ENCODE measurements at regions of chr3 and their contacts with region 1.

Region 1: DNA sequence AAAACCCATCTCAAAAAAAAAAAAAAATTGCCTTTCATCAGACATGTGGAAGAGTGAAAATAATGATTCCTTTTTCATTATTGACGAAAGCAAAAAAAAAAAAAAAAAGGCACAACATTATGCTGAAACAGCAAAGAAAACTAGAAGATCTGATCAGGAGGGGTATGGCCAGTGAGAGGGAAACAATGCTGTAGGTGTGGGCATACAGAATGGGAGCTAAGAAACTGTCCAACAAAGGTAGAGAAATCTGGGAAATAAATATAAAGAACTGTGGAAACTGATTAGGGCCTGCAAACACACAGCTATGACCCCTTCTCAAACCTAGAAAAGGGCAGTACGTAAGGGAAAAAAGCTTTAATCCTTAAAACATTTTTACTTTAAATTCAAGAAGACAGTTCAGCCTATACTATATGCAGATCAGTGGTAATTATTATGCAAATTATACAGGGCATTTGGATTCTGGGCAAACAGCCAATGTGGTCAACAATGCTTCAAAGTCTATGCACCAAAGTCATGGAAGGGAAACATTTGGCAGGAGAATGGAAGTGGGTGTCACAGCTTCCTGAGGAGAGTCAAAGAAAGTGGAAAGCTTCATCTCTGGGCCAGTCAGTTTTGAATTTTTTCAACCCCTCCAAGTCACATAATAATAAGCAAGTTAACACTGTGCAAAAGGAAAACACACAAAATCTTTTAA is 68.3 kb upstream of the SLC12A8 start:
- DNase-seq: no peak
- ATAC-seq: no peak
- H3K4me3 ChIP-seq: no peak overlapping the region
- H3K27ac ChIP-seq: no peak overlapping the region
- H3K4me1 ChIP-seq: no peaks in the 10 kb centered on the region
- H3K27me3 ChIP-seq: no peaks in the 10 kb centered on the region
- CTCF ChIP-seq: no peak
- EP300 ChIP-seq: no peak
- POLR2A ChIP-seq: no peak
- RAD21 ChIP-seq: no peak

Region 2: DNA sequence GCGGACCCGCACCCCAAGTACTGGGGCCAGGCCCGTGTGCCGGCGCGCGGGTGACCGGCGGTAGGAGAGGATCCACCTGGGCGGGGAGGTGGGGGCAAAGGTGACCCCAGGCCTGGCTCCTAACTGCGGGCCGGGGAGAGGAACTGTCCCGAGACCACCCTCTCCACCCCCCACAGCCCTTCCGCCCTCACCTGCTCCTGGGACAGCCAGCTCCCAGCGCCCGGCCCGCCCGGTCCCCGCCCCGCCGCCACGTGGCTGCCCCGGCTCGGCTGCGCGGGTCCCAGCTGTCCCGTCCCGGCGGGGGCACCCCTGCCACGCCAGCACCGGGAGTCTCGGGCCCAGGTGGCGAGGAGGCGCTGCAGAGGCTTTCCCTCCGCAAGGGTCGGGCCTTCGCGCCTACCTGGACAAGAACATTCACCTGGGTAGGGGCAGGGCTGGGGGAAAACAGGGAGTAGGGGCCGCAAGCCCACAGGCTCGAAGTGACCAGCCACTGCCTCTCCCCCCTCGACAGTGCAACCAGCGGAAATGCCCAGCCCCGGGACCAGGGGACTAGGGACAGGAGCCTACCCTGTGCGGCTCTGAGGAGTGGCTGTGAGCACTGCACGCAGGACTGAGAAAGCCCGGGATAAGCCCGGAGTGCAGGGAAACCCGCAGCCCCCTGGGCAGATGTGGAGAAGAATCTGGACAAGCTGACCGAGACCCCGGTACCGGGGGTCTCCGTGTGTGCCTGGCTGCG is 68.1 kb before region 1 on chr3 and contains the start of gene SLC12A8:
- CTCF ChIA-PET with region 1: no interaction called
- POLR2A ChIA-PET with region 1: no interaction called
- RAD21 ChIA-PET with region 1: no interaction called
- SMC1A ChIA-PET with region 1: no interaction called
- in situ Hi-C with region 1: no loop called
- intact Hi-C with region 1: no loop called
- DNase-seq: no peak
- ATAC-seq: peak; percentile 53
- H3K4me3 ChIP-seq: peak within 1 kb of the TSS; percentile 59; the same call in 1 of the 2 replicates
- H3K27ac ChIP-seq: no peak within 1 kb of the TSS; the same call in 1 of the 2 replicates
- H3K4me1 ChIP-seq: peaks cover 6% of the 10 kb centered on the region
- H3K27me3 ChIP-seq: peaks cover 0 to 7% of the 10 kb centered on the region in 2 experiments; a peak in 2 of 4 replicates
- CTCF ChIP-seq: no peak
- EP300 ChIP-seq: no peak
- POLR2A ChIP-seq: no peak
- RAD21 ChIP-seq: no peak
- polyA plus RNA-seq, gene SLC12A8: 39.8 to 46.1 TPM

Region 3: DNA sequence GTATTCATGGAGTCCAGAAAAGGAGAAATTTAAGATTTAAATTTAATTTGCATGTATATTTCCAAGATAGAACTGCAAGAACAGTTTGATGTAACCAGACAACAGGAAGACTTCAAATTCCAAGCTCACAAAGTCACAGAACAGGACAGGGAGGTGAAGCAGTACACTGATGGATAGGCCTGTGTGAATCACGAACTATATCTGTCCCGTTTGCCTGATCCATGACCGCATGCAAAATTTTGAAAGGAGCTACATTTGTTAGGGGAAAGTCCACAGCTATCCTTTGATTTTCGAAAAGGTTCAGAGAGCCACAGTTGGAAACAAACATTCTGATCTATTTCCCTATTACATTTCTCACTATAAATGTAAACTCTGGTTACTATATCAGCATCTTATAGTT is 11.2 kb after region 1 on chr3:
- CTCF ChIA-PET with region 1: interaction called, 5 read pairs
- POLR2A ChIA-PET with region 1: interaction called, 4 read pairs
- RAD21 ChIA-PET with region 1: no interaction called
- SMC1A ChIA-PET with region 1: interaction called, 12 read pairs
- in situ Hi-C with region 1: no loop called
- intact Hi-C with region 1: no loop called
- DNase-seq: no peak
- ATAC-seq: no peak
- H3K4me3 ChIP-seq: no peak overlapping the region
- H3K27ac ChIP-seq: no peak overlapping the region
- H3K4me1 ChIP-seq: no peaks in the 10 kb centered on the region
- H3K27me3 ChIP-seq: no peaks in the 10 kb centered on the region
- CTCF ChIP-seq: no peak
- EP300 ChIP-seq: no peak
- POLR2A ChIP-seq: no peak
- RAD21 ChIP-seq: no peak

Region 4: GRCh38 chr3:125437631-125438435 is 157.0 kb after region 1 on chr3:
- CTCF ChIA-PET with region 1: interaction called, 3 read pairs
- POLR2A ChIA-PET with region 1: no interaction called
- RAD21 ChIA-PET with region 1: interaction called, 3 read pairs
- SMC1A ChIA-PET with region 1: no interaction called
- in situ Hi-C with region 1: no loop called
- intact Hi-C with region 1: loop called (anchors 10 kb)
- DNase-seq: no peak
- ATAC-seq: peak; percentile 45
- H3K4me3 ChIP-seq: no peak overlapping the region
- H3K27ac ChIP-seq: no peak overlapping the region
- H3K4me1 ChIP-seq: peaks cover 19% of the 10 kb centered on the region
- H3K27me3 ChIP-seq: no peaks in the 10 kb centered on the region
- CTCF ChIP-seq: peak; percentile 92 to 96 (median 92)
- EP300 ChIP-seq: no peak
- POLR2A ChIP-seq: no peak
- RAD21 ChIP-seq: peak; percentile 97

Measured in GM12878 (cell line).